ENCODE measurements at regions of chr12 and their contacts with region 1.

Region 1: DNA sequence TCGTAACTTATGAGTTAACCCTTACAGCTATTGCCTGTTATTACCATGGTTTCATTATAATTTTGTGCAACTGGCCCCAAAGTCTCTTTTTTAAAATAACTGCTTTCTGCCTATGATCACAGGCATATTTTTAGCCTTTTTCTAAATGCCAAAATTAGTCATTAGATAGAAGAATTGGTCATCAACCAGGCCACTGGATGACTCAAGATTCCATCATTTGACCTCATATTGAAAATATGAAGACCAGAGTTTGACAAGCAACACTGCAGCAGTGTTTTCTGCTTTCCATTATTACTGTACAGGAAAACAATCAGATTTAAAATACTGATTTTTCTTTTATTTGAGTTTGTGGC is 54.7 kb upstream of the OTOGL start:
- DNase-seq: no peak
- H3K4me3 ChIP-seq: no peak overlapping the region
- H3K27ac ChIP-seq: peak overlapping the region; percentile 79 to 80
- H3K4me1 ChIP-seq: peaks cover 0 to 14% of the 10 kb centered on the region in 2 donors
- H3K27me3 ChIP-seq: no peaks in the 10 kb centered on the region
- CTCF ChIP-seq: no peak

Region 2: DNA sequence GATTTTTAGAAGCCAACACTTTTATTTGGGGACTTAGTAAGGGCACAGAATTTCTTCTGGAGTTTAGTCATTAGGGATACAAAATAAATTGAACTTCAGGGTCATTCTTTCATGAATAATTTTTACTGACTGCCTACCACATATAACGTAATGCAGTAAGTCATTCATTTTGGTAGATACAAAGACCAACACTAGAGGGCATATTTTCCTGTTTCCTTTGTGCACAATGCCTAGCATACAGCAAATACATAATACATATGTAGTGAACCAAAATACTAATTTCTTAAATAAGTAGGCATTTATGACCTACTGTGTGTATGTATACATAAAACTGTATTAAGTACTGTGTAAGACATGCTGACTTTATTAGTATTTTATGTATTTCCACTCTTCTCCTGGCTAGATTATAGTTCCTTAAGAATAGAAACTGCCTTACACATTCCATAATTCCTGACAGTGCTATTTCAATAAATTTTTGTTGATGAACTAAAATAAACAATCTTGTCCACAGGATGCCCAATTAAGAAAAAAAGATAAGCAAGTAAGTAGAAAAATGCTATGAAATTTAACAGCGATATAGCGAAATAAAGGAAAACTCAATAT is 157.7 kb before region 1 on chr12:
- intact Hi-C with region 1: loop called (anchors 2 kb)
- DNase-seq: no peak
- H3K4me3 ChIP-seq: no peak overlapping the region
- H3K27ac ChIP-seq: no peak overlapping the region
- H3K4me1 ChIP-seq: peaks cover 0 to 56% of the 10 kb centered on the region in 2 donors
- H3K27me3 ChIP-seq: no peaks in the 10 kb centered on the region
- CTCF ChIP-seq: peak in 2 of 3 experiments; percentile 49 to 55

Region 3: DNA sequence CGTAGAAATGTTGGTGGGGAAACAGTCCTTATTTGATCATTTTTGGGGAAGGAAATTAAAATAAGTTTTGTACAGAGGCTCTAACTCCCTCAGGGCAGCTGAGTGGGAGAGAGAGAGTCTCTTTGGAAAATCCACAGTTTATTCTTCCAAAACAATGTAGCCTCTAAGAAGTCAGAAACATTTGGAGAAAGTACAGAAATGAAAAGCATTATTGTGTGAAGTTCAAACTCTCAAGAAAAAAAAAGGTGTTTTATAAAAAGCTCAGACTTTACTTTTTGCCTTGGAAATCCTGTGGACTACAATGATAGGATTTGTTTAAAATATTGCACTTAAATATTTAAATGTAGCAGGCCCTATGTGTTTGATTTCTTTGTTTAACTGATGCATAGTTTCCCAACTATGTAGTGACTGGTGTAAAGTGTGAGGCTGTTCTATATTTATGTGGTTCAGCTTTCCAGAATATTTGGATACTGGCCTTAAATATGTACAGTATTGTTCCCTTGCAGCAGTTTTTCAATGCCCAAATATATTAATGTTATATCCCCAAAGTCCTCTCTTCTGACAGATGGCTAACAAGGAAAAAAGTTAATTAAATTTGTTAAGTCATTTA is 27.3 kb before region 1 on chr12:
- intact Hi-C with region 1: no loop called
- DNase-seq: no peak
- H3K4me3 ChIP-seq: peak overlapping the region in 1 of 2 donors; percentile 33
- H3K27ac ChIP-seq: peak overlapping the region; percentile 25 to 68
- H3K4me1 ChIP-seq: peaks cover 0 to 14% of the 10 kb centered on the region in 2 donors
- H3K27me3 ChIP-seq: no peaks in the 10 kb centered on the region
- CTCF ChIP-seq: no peak

Region 4: GRCh38 chr12:80033448-80033847 is 11.2 kb before region 1 on chr12:
- intact Hi-C with region 1: loop called (anchors 1 kb)
- DNase-seq: peak in 1 of 2 donors; percentile 72
- H3K4me3 ChIP-seq: peak overlapping the region in 1 of 2 donors; percentile 24
- H3K27ac ChIP-seq: peak overlapping the region; percentile 59 to 61
- H3K4me1 ChIP-seq: peaks cover 0 to 19% of the 10 kb centered on the region in 2 donors
- H3K27me3 ChIP-seq: no peaks in the 10 kb centered on the region
- CTCF ChIP-seq: no peak